MCF 10A (cell line): ENCODE measurements at regions of chr1 and their contacts with region 1.

Region 1: DNA sequence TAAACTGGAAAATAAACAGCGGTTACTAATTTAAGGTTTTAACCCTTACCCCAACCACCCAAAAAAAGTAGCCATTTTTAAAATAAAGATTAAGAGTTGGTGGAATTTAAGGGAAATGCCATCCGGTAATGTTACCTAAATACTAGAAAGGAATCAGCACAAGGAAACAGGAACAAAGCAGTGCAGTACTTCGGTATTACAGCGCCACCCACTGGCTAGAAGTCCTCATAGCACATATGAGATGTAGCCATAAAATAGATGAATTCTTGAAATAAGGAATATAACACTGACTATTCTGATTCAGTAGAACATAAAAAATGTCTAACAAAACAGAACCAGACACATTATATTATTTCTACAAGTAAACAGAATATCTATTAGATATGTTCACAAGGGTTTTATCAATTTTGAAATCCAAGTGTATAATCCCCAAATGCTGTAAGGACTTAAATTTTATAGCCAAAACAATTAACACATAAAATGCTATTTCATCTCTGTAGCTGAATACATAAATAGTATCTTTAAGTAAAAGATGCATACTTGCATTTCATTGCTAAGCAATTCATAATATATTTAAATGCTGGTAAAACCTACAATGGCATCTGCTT is 58.8 kb downstream of the FRRS1 start:
- DNase-seq: peak; percentile 73
- H3K4me3 Mint-ChIP-seq: no peak overlapping the region
- H3K27ac Mint-ChIP-seq: no peak overlapping the region
- H3K4me1 Mint-ChIP-seq: no peaks in the 10 kb centered on the region
- H3K27me3 Mint-ChIP-seq: no peaks in the 10 kb centered on the region
- CTCF ChIP-seq: peak; percentile 84

Region 2: DNA sequence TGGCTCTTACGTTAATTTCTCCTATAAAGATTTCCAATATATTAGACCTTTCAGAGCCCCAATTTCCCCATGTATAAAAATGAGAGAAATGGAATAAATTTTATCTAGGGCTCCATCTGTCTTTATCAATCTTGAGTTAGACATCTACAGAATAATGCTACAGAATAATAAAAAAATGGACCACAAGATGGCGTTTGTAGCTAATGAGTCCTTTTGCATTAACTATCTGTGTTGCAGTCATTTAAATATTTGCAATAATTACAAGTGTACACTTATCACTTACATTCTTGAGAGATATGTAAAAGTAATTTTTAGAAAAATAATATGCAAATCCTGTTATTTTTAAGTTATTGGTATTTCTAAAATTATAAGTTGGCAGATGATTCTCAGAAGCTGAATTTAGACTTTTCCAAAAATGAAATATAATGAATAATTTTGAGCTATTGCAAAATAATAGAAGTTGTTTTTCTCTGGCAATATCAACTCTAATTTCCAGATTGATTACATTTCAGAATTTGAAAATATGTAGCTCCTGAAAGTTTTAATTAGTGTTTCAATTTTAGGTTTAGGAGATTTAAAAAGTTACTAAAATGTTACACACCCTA is 958.4 kb before region 1 on chr1:
- CTCF ChIA-PET with region 1: interaction called, 8 read pairs
- POLR2A ChIA-PET with region 1: no interaction called
- intact Hi-C with region 1: loop called (anchors 1 kb)
- DNase-seq: peak; percentile 25
- H3K4me3 Mint-ChIP-seq: no peak overlapping the region
- H3K27ac Mint-ChIP-seq: no peak overlapping the region
- H3K4me1 Mint-ChIP-seq: no peaks in the 10 kb centered on the region
- H3K27me3 Mint-ChIP-seq: no peaks in the 10 kb centered on the region
- CTCF ChIP-seq: peak; percentile 37

Region 3: GRCh38 chr1:98794196-98794886 is 913.3 kb before region 1 on chr1:
- CTCF ChIA-PET with region 1: interaction called, 8 read pairs
- POLR2A ChIA-PET with region 1: no interaction called
- intact Hi-C with region 1: loop called (anchors 1 kb)
- DNase-seq: peak; percentile 79
- H3K4me3 Mint-ChIP-seq: no peak overlapping the region
- H3K27ac Mint-ChIP-seq: no peak overlapping the region
- H3K4me1 Mint-ChIP-seq: peaks cover 5% of the 10 kb centered on the region
- H3K27me3 Mint-ChIP-seq: no peaks in the 10 kb centered on the region
- CTCF ChIP-seq: peak; percentile 72

Region 4: GRCh38 chr1:98884864-98885263 is 822.8 kb before region 1 on chr1:
- CTCF ChIA-PET with region 1: no interaction called
- POLR2A ChIA-PET with region 1: no interaction called
- intact Hi-C with region 1: loop called (anchors 10 kb)
- DNase-seq: no peak
- H3K4me3 Mint-ChIP-seq: no peak overlapping the region
- H3K27ac Mint-ChIP-seq: no peak overlapping the region
- H3K4me1 Mint-ChIP-seq: no peaks in the 10 kb centered on the region
- H3K27me3 Mint-ChIP-seq: no peaks in the 10 kb centered on the region
- CTCF ChIP-seq: no peak

Region 5: DNA sequence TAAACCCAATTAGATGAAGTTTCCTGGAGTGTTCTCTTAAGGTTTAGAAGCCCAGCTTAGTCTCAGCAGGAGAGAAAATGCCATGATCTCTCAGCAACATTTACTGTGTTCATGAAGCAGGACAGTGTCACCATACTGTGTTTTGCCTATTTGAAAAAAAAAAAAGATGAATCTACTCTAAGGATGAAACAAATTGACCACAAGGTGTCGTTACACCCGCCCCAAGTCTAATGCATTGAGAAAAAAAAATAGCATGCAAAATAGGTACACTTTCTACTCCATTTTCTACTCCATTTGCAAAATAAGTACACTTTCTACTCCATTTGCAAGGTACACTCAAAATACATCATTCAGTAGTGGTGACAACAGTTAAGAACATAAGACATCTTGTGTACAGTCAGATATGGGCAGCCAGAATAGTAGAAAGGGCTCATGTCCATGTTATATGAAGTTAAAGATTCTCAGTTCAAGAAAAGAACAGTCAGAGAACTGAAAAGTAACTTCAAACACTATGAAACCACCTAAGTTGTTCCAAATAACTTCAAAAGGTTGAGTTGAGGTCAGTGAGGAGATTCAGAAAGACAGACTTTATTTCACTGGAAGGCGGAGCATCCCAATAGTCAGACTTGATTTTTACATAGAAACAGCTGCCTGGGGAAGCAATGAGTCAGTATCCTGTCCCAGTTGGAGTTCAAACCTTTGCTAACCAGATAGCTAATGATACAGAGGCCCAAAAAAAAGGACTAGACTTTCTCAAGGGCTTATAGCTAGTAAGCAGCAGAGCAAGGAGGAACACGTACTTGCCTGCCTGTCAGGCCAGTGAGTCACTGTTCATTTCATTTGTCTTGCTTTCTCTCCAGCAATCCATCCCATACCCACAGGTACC is 716.3 kb before region 1 on chr1:
- CTCF ChIA-PET with region 1: no interaction called
- POLR2A ChIA-PET with region 1: no interaction called
- intact Hi-C with region 1: loop called (anchors 5 kb)
- DNase-seq: peak; percentile 62
- H3K4me3 Mint-ChIP-seq: no peak overlapping the region
- H3K27ac Mint-ChIP-seq: peak overlapping the region; percentile 57
- H3K4me1 Mint-ChIP-seq: no peaks in the 10 kb centered on the region
- H3K27me3 Mint-ChIP-seq: no peaks in the 10 kb centered on the region
- CTCF ChIP-seq: peak; percentile 40

Region 6: DNA sequence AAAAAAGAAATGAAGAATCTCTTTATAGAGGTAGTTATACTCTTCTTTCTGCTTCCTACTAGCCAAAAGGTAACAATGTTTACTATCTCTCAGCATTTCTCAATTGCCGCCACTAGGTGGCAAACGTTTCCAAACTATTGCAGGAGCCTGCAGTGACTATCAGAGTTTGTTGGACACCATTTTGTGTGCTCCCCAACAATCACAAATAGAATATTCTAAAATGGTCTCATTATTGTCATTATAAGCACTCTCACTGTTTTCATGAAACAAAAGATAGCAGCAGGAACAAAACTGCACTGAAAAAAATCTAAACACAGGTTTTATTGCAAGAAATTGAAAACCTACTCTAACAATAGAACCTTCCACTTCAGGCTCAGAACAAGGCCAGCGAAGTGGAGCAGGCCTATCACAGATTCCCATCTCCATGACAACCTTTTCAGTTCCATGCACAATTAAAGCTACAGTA is 527.3 kb before region 1 on chr1:
- CTCF ChIA-PET with region 1: interaction called, 37 read pairs
- POLR2A ChIA-PET with region 1: no interaction called
- intact Hi-C with region 1: loop called (anchors 1 kb)
- DNase-seq: peak; percentile 79
- H3K4me3 Mint-ChIP-seq: no peak overlapping the region
- H3K27ac Mint-ChIP-seq: no peak overlapping the region
- H3K4me1 Mint-ChIP-seq: no peaks in the 10 kb centered on the region
- H3K27me3 Mint-ChIP-seq: no peaks in the 10 kb centered on the region
- CTCF ChIP-seq: peak; percentile 70

Region 7: GRCh38 chr1:99496067-99496466 is 211.6 kb before region 1 on chr1:
- CTCF ChIA-PET with region 1: interaction called, 4 read pairs
- POLR2A ChIA-PET with region 1: no interaction called
- intact Hi-C with region 1: loop called (anchors 5 kb)
- DNase-seq: peak; percentile 77
- H3K4me3 Mint-ChIP-seq: no peak overlapping the region
- H3K27ac Mint-ChIP-seq: peak overlapping the region; percentile 46
- H3K4me1 Mint-ChIP-seq: peaks cover 15% of the 10 kb centered on the region
- H3K27me3 Mint-ChIP-seq: no peaks in the 10 kb centered on the region
- CTCF ChIP-seq: no peak

Region 8: DNA sequence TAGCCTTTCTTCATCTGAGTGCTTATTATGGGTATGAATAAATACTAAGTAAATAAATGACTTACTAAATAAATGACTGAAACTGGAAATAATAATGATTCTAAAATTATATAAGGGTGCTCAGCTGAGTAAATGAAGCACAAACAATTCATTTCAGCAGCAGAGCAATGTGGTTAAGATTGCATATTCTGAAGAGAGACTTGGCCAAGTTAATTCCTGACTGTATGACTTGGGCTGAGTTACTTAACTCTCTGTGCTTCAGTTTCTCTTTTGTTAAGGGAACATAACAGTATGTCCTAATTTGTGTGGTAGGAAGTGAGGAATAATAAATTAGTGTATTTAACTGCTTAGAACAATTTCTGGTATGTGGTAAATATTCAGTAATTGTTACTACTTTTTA is 161.7 kb after region 1 on chr1:
- CTCF ChIA-PET with region 1: no interaction called
- POLR2A ChIA-PET with region 1: no interaction called
- intact Hi-C with region 1: no loop called
- DNase-seq: no peak
- H3K4me3 Mint-ChIP-seq: no peak overlapping the region
- H3K27ac Mint-ChIP-seq: no peak overlapping the region
- H3K4me1 Mint-ChIP-seq: no peaks in the 10 kb centered on the region
- H3K27me3 Mint-ChIP-seq: no peaks in the 10 kb centered on the region
- CTCF ChIP-seq: no peak

Region 9: DNA sequence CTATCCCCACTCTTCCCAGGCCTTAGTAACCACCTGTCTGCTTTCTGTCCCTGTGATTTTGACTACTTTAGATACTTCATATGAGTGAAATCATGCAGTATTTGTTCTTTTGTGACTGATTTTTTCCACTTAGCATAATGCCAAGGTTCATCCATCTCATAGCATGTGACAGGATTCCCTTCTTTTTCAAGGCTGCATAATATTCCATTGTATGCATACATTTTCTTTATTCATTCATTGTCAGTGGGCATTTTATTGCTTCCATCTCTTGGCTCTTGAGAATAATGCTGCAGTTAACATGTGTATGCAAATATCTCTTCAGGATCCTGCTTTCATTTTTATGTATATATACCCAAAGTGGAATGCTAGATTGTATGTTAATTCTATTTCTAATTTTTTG is 198.9 kb after region 1 on chr1:
- CTCF ChIA-PET with region 1: no interaction called
- POLR2A ChIA-PET with region 1: no interaction called
- intact Hi-C with region 1: no loop called
- DNase-seq: no peak
- H3K4me3 Mint-ChIP-seq: no peak overlapping the region
- H3K27ac Mint-ChIP-seq: no peak overlapping the region
- H3K4me1 Mint-ChIP-seq: no peaks in the 10 kb centered on the region
- H3K27me3 Mint-ChIP-seq: no peaks in the 10 kb centered on the region
- CTCF ChIP-seq: no peak

Region 10: GRCh38 chr1:100023482-100023881 is 315.8 kb after region 1 on chr1:
- CTCF ChIA-PET with region 1: no interaction called
- POLR2A ChIA-PET with region 1: no interaction called
- intact Hi-C with region 1: no loop called
- DNase-seq: no peak
- H3K4me3 Mint-ChIP-seq: no peak overlapping the region
- H3K27ac Mint-ChIP-seq: no peak overlapping the region
- H3K4me1 Mint-ChIP-seq: no peaks in the 10 kb centered on the region
- H3K27me3 Mint-ChIP-seq: no peaks in the 10 kb centered on the region
- CTCF ChIP-seq: no peak